Caco-2 (cell line): ENCODE measurements at regions of chr2 and their contacts with region 1.

Region 1: DNA sequence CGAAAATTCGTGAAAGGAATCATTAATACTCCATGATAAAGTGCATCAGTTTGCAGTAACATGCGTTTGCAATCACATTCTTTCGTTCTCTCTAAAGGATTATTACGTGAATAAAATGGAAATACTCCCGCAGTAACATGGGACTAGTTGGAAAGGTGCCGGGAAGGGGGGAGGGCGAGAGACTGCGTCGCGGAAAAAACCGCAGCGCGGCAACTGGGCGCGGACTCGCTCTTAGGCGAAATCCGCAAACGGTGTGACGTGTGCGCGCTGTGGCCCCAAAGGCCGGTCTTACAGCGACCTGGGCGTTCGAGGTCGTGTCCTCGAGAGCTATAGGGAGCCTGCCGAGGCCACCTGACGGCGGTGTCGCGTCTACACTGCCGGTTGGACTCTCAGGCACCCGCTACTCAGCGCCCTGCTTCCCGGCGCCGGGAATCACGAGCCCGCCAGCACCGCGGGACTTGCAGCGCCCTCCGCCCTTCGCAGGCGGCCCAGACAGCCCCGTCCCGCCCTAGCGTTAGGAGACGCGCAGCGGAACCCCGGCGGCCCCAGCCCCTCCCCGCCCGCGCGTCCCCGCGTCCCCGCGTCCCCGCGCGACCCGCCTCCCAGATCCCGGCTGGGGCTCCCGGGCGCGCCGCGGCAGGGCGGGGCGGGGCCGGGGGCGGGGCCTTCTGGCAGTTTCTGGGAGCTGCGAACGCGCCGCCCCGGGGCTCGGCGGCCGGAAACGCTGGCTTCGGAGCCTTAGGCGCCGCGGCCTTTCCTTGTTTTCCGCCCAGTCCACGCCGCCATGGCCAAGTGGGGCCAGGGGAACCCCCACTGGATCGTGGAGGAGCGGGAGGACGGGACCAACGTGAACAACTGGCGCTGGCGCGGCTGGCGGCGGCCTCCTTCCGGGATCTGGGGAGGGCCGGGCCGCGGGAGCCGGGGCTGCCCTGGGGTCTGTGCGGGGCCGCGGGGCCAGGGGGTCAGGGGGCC is 15.1 kb downstream of the C2orf74 start:
- DNase-seq: peak; percentile 96 to 97
- H3K4me3 ChIP-seq: peak overlapping the region; percentile 82
- H3K4me3 Mint-ChIP-seq: peak overlapping the region; percentile 83
- H3K27ac Mint-ChIP-seq: peak overlapping the region; percentile 80
- H3K4me1 ChIP-seq: peaks cover 16% of the 10 kb centered on the region; the same call in 1 of the 2 replicates
- H3K4me1 Mint-ChIP-seq: peaks cover 16% of the 10 kb centered on the region
- H3K27me3 ChIP-seq: no peaks in the 10 kb centered on the region
- H3K27me3 Mint-ChIP-seq: no peaks in the 10 kb centered on the region
- CTCF ChIP-seq: peak in 1 of 2 experiments; percentile 13

Region 2: DNA sequence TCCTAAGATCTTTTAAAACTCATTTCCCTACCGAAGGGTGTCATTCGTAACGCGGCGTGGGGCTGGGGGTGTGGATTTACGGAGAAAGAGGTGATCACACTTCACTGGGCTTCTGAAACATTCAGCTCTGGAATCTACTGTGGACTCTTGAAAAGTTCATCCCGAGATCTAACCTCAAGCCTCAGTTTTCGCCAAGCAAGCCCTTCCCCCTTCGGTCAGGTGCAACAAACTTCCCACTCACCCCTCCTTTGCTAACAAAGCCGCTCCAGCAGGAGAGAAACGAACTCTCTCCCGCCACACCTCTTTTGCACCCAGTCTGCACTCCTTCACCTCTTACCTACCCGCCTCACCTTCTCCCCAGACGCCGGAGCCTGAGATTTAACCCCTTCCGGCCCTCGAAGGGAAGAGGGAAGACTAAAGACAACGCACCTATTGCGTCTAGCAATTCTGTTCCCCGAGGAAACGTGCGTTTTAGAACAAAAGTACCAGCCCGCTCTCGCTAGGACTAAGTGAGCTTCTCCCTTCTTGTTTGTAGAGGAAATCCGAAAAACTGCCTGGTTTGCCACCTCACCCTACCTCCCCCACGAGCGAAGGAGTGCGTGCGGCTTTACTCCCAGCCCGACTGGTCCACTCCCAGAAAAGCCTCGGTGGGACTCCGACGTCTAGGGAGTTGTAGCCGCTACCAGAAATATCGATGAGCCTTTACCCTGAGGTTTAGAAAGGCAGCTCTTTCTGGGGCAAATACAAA is 160.1 kb before region 1 on chr2:
- CTCF ChIA-PET with region 1: no interaction called
- POLR2A ChIA-PET with region 1: interaction called, 4 read pairs
- intact Hi-C with region 1: loop called (anchors 5 kb)
- DNase-seq: peak; percentile 87 to 94
- H3K4me3 ChIP-seq: peak overlapping the region; percentile 67
- H3K4me3 Mint-ChIP-seq: peak overlapping the region; percentile 88
- H3K27ac Mint-ChIP-seq: peak overlapping the region; percentile 97
- H3K4me1 ChIP-seq: peaks cover 8% of the 10 kb centered on the region
- H3K4me1 Mint-ChIP-seq: no peaks in the 10 kb centered on the region
- H3K27me3 ChIP-seq: no peaks in the 10 kb centered on the region
- H3K27me3 Mint-ChIP-seq: no peaks in the 10 kb centered on the region
- CTCF ChIP-seq: no peak

Region 3: GRCh38 chr2:61065715-61066709 is 111.0 kb before region 1 on chr2 and contains the start of gene SANBR:
- CTCF ChIA-PET with region 1: no interaction called
- POLR2A ChIA-PET with region 1: no interaction called
- intact Hi-C with region 1: loop called (anchors 2 kb)
- DNase-seq: peak; percentile 88 to 95
- H3K4me3 ChIP-seq: peak within 1 kb of the TSS; percentile 99
- H3K4me3 Mint-ChIP-seq: peak within 1 kb of the TSS; percentile 98
- H3K27ac Mint-ChIP-seq: peak within 1 kb of the TSS; percentile 91
- H3K4me1 ChIP-seq: peaks cover 3% of the 10 kb centered on the region; the same call in 1 of the 2 replicates
- H3K4me1 Mint-ChIP-seq: peaks cover 7% of the 10 kb centered on the region
- H3K27me3 ChIP-seq: no peaks in the 10 kb centered on the region
- H3K27me3 Mint-ChIP-seq: no peaks in the 10 kb centered on the region
- CTCF ChIP-seq: peak in 1 of 2 experiments; percentile 10
- total RNA-seq, gene SANBR: 13.3 and 14.3 TPM in 2 replicates

Region 4: DNA sequence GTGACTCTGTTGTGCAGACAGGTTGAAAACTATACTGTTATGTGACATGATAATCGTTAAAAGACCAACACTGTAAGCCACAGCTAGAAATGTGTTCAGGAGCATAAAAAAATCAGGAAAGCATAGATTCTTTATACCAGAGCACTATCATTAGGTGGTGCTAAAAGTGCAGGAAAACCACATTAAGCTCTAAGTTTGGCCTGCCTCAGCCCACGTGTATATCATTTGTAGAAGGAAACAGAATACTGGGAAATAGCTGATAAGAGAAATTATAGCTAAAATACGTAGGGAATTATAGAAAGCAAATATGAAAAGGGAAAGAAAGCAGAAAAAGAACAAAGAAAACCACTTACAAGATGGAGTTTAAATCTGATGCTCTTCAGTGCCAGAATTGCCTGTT is 41.5 kb before region 1 on chr2:
- CTCF ChIA-PET with region 1: interaction called, 6 read pairs
- POLR2A ChIA-PET with region 1: no interaction called
- intact Hi-C with region 1: loop called (anchors 2 kb)
- DNase-seq: peak in 1 of 2 experiments; percentile 16
- H3K4me3 ChIP-seq: no peak overlapping the region
- H3K4me3 Mint-ChIP-seq: no peak overlapping the region
- H3K27ac Mint-ChIP-seq: no peak overlapping the region
- H3K4me1 ChIP-seq: no peaks in the 10 kb centered on the region
- H3K4me1 Mint-ChIP-seq: no peaks in the 10 kb centered on the region
- H3K27me3 ChIP-seq: no peaks in the 10 kb centered on the region
- H3K27me3 Mint-ChIP-seq: peaks cover 3% of the 10 kb centered on the region
- CTCF ChIP-seq: no peak

Region 5: DNA sequence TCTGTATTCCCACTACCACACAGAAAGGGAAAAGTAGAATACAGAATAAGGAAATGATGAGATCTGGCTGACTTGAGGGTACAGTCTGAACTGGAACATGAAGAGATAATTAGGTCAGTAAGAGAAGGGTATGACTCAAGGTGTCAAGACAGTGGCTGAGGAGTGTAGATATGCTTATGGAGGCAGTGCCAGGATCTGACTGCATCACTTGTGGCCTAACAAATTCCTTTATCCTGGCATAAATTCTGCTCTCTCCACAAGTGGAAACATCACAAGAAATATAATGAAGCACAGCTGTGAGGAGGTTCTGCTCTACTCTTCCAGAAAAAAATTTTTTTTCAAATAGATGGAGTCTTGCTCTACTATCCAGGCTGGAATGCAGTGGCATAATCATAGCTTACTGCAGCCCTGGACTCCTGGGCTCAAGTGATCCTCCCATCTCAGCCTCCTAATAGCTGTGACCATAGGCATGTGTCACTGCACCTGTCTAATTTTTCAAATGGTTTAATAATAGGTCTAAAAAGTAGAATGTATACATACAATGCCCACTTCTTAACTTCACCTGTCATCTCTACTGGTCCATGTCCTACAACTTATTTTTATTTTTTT is 70.3 kb after region 1 on chr2:
- CTCF ChIA-PET with region 1: no interaction called
- POLR2A ChIA-PET with region 1: no interaction called
- intact Hi-C with region 1: no loop called
- DNase-seq: no peak
- H3K4me3 ChIP-seq: no peak overlapping the region
- H3K4me3 Mint-ChIP-seq: no peak overlapping the region
- H3K27ac Mint-ChIP-seq: no peak overlapping the region
- H3K4me1 ChIP-seq: no peaks in the 10 kb centered on the region
- H3K4me1 Mint-ChIP-seq: peaks cover 7% of the 10 kb centered on the region
- H3K27me3 ChIP-seq: no peaks in the 10 kb centered on the region
- H3K27me3 Mint-ChIP-seq: no peaks in the 10 kb centered on the region
- CTCF ChIP-seq: no peak